CD4-positive, alpha-beta T cell (primary cell): ENCODE measurements at regions of chr1 and their contacts with region 1.

Region 1: DNA sequence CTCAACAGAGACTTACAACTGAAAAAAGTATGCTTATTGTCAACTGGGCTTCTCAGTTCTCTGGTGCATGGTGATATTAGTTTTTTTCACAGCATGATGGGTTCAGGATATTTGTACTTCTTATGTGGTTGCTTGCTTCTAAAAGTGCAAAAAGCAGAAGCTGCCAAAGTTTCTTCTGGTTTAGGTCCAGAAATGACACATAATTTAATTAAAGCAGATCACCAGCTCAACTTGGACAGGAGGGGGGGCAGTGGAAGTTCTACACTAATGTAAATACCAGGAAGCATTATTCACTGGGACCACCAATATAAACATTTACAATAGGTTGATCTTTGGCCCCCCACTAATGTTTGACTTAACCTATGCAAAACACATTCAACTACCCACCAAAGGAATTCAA is 354.8 kb upstream of the BRINP3 start:
- DNase-seq: no peak
- ATAC-seq: no peak
- H3K4me3 ChIP-seq: no peak overlapping the region
- H3K4me3 Mint-ChIP-seq: no peak overlapping the region
- H3K27ac ChIP-seq: no peak overlapping the region
- H3K27ac Mint-ChIP-seq: no peak overlapping the region
- H3K4me1 ChIP-seq: no peaks in the 10 kb centered on the region
- H3K4me1 Mint-ChIP-seq: no peaks in the 10 kb centered on the region
- H3K27me3 ChIP-seq: no peaks in the 10 kb centered on the region
- H3K27me3 Mint-ChIP-seq: no peaks in the 10 kb centered on the region
- CTCF ChIP-seq: no peak

Region 2: GRCh38 chr1:190881064-190881463 is 48.6 kb after region 1 on chr1:
- CTCF ChIA-PET with region 1: no interaction called
- POLR2A ChIA-PET with region 1: no interaction called
- intact Hi-C with region 1: loop called in 1 of 2 experiments (anchors 5 kb)
- DNase-seq: no peak
- ATAC-seq: no peak
- H3K4me3 ChIP-seq: no peak overlapping the region
- H3K4me3 Mint-ChIP-seq: no peak overlapping the region
- H3K27ac ChIP-seq: no peak overlapping the region
- H3K27ac Mint-ChIP-seq: no peak overlapping the region
- H3K4me1 ChIP-seq: no peaks in the 10 kb centered on the region
- H3K4me1 Mint-ChIP-seq: no peaks in the 10 kb centered on the region
- H3K27me3 ChIP-seq: no peaks in the 10 kb centered on the region
- H3K27me3 Mint-ChIP-seq: no peaks in the 10 kb centered on the region
- CTCF ChIP-seq: no peak